ENCODE measurements at regions of chr6 and their contacts with region 1.

Region 1: DNA sequence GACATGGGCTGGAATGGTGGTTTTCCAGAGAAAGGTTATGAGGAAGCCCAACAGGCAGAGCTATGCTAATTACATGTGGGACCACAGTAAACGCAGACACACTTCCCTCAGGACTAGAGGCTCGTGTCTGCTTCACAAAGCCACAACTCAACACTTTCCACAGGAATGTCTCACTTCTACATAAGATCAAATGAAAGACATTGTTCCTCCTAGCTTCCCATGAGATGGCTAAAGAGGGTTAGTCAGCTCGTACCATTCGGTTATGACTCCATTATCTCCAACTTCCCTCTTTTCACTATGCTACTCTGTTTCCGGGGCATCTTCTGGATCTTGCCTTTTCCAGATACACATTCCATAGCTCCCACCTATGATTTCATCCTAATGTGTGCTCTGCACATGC is 29.1 kb upstream of the ZC3H12D start:
- DNase-seq: no peak
- ATAC-seq: no peak
- H3K4me3 Mint-ChIP-seq: no peak overlapping the region
- H3K27ac Mint-ChIP-seq: no peak overlapping the region
- H3K4me1 Mint-ChIP-seq: peaks cover 49% of the 10 kb centered on the region
- H3K27me3 Mint-ChIP-seq: no peaks in the 10 kb centered on the region

Region 2: DNA sequence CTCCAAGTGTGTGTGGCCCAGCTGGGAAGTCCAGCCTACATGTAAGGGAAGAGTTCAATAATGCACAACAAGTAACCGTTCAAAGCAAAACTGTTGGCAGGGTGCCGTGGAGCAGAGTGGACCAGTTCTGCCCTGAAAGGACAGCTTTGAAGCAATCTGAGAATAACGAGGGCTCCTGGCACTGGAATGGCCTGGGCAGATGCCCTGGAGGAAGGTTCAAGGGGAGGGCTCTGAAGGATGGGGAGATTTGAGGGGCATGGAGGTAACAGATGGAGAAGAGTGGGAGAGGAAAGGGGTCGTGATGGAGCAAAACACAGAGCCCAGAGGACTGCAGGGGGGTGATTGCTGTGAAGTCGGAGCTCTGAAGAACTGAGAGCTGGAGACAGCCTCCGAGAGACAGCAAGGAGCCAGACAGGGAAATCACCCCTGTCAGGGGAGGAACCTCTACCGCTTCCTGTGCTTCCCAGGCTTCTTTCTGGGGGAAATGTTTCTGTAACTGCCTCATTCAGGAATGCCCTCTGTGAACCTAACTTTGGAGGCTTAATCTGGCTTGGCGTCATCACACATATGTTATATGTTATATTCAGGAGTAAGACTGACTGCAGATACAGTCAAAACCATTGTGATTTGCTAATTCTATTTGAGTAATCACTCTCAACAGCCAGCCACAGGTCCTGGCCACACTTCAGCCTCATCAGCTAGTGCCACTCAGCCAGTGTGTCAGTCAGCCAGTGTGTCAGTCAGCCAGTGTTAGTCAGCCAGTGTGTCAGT is 70.3 kb before region 1 on chr6:
- CTCF ChIA-PET with region 1: interaction called, 13 read pairs
- DNase-seq: no peak
- ATAC-seq: peak; percentile 37
- H3K4me3 Mint-ChIP-seq: no peak overlapping the region
- H3K27ac Mint-ChIP-seq: no peak overlapping the region
- H3K4me1 Mint-ChIP-seq: peaks cover 43% of the 10 kb centered on the region
- H3K27me3 Mint-ChIP-seq: no peaks in the 10 kb centered on the region

Region 3: DNA sequence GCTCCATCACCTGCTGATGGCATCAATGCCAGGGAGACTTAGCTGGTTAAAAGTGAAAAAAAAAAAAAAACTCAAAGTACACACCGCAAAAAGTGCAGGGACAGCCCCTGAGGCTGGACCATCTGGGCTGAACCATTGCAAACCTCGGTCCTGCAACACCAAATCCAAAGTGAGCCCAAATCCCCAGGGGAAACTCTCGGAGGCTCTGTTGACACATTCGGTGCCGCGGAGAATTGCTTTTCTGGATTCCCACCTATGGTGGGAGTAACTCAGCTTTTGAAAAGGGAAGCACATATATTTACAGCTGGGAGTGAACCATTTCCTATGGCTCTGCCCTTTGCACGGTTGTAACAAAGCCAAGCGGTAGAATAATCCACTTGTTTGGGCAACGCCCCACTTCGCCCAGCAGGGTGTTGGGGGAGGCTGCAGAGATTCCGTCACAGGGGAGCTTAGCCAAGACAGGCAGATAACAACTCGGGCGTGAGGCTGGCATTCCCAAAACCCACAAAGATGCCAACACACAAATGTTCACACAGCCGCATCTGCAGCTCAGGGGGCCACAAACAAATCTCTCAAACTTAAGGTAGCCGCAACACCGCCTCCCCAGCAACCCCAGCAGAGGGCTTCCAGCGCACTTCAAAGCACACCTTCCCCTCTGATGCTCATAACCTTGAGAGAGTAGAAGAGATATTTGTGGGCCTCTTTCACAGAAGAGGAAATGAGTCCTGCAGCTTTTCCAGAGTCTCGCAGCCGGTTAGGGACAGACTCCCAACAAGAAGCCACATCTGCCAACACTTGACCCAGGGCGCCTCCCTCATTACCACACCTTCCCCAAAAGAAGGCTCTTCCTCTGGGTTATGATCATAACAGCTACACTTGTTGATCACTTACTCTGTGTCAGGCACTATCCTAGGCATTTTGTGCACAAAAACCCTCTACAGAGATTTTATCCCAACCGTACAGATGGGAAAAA is 40.5 kb before region 1 on chr6:
- CTCF ChIA-PET with region 1: interaction called, 17 read pairs
- DNase-seq: no peak
- ATAC-seq: no peak
- H3K4me3 Mint-ChIP-seq: no peak overlapping the region
- H3K27ac Mint-ChIP-seq: peak overlapping the region; percentile 9
- H3K4me1 Mint-ChIP-seq: peaks cover 48% of the 10 kb centered on the region
- H3K27me3 Mint-ChIP-seq: no peaks in the 10 kb centered on the region

Region 4: DNA sequence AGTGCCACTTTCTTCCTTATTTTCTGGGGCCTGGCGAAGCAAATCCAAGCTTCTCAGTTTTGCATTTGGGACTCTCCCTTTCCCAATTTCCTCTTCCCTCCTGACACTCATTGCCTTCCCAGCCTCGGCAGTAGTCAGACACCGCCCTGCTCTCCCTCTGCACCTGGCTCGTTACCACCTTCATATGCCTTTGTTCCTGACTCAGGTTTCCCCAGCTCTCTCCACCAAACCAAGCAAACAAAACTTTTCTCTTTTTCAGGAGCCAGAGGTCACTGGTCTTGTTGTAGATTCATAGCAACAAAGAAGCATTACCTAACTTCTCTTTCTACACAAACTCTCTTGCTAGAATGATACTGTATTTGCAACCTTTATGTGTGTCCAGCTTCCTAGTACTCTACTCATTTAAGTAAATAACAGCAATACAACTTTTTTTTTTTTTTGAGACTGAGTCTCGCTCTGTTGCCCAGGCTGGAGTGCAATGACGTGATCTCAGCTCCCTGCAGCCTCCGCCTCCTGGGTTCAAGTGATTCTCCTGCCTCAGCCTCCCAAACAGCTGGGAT is 20.1 kb before region 1 on chr6:
- CTCF ChIA-PET with region 1: interaction called, 17 read pairs
- DNase-seq: no peak
- ATAC-seq: no peak
- H3K4me3 Mint-ChIP-seq: no peak overlapping the region
- H3K27ac Mint-ChIP-seq: no peak overlapping the region
- H3K4me1 Mint-ChIP-seq: peaks cover 61% of the 10 kb centered on the region
- H3K27me3 Mint-ChIP-seq: no peaks in the 10 kb centered on the region

Region 5: GRCh38 chr6:149503276-149503675 is 10.6 kb before region 1 on chr6:
- CTCF ChIA-PET with region 1: interaction called, 15 read pairs
- DNase-seq: no peak
- ATAC-seq: no peak
- H3K4me3 Mint-ChIP-seq: no peak overlapping the region
- H3K27ac Mint-ChIP-seq: no peak overlapping the region
- H3K4me1 Mint-ChIP-seq: peaks cover 35% of the 10 kb centered on the region
- H3K27me3 Mint-ChIP-seq: no peaks in the 10 kb centered on the region

Region 6: DNA sequence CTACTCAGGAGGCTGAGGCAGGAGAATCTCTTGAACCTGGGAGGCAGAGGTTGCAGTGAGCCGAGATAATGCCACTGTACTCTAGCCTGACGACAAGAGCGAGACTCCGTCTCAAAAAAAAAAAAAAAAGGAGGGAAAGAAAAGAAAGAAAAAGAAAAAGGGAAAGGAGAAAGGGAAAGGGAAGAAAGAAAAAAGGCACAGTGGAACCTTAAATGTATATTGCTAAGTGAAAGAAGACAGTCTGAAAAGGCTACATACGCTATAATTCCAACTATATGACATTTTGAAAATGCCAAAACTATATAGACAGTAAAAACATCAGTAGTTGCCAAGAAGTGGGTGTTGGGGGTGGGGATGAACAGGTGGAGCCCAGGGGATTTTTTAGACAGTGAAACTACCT is 15.7 kb after region 1 on chr6:
- CTCF ChIA-PET with region 1: interaction called, 21 read pairs
- DNase-seq: no peak
- ATAC-seq: no peak
- H3K4me3 Mint-ChIP-seq: no peak overlapping the region
- H3K27ac Mint-ChIP-seq: no peak overlapping the region
- H3K4me1 Mint-ChIP-seq: peaks cover 17% of the 10 kb centered on the region
- H3K27me3 Mint-ChIP-seq: no peaks in the 10 kb centered on the region

Region 7: DNA sequence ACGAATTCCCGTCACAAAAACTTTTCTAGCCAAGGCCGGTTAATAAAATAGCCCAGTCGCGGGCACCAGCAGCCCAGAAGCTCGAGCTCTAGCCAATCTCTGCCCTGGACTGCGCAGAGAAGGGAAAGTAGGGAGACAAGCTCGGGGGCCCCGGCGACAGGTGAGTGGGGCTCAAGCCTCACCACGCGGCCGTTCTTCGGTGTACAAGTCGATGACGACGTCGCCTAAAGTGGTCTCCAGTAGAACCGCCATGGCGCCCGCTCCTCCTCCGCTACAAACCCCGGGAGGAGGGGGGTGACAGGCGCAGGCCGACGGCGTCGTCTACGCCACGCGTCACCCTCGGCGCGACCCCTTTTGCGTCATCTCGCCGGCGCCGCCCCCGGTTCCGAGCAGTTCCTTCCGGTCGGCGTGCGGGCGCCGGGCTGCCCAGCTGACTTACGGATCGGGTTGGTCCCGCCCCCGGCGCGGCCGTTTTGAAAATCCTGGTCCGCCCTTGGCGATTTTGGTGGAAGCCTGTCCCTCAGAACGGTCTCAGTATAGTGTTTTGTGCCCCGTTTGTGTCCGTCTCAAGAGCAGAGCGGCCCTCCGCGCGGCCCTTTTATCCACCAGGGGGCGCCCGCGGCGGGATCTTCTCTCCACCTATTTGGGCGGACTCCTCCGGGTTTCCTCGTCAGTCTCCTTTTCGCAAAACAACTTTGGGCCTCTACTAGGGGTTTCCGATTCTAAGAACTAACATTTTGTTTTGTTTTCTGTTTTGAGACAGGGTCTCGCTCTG is 32.0 kb after region 1 on chr6 and contains the start of gene PPIL4:
- CTCF ChIA-PET with region 1: interaction called, 15 read pairs
- DNase-seq: peak; percentile 97
- ATAC-seq: peak; percentile 86
- H3K4me3 Mint-ChIP-seq: peak within 1 kb of the TSS; percentile 99
- H3K27ac Mint-ChIP-seq: peak within 1 kb of the TSS; percentile 99
- H3K4me1 Mint-ChIP-seq: peaks cover 37% of the 10 kb centered on the region
- H3K27me3 Mint-ChIP-seq: no peaks in the 10 kb centered on the region
- total RNA-seq, gene PPIL4: 17.8 to 18.7 TPM

Region 8: DNA sequence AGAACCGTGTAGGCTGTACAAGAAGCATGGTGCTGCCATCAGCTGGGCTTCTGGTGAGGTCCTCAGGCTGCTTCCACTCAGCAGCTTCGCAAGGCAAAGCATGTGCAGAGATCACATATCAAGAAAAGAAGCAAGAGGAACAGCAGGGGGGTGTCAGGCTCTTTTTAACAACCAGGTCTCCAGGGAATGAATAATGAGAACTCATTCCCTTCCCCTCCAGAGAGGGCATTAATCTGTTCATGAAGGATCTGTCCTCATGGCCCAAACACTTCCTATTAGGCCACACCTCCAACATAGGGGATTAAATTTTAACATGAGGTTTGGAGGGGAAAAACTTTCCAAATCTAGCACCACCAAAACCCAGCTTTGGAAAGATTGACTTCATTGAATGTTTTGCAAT is 72.2 kb after region 1 on chr6:
- CTCF ChIA-PET with region 1: no interaction called
- DNase-seq: no peak
- ATAC-seq: no peak
- H3K4me3 Mint-ChIP-seq: no peak overlapping the region
- H3K27ac Mint-ChIP-seq: no peak overlapping the region
- H3K4me1 Mint-ChIP-seq: no peaks in the 10 kb centered on the region
- H3K27me3 Mint-ChIP-seq: no peaks in the 10 kb centered on the region

Region 9: GRCh38 chr6:149755300-149756260 is 241.7 kb after region 1 on chr6:
- CTCF ChIA-PET with region 1: no interaction called
- DNase-seq: peak; percentile 7
- ATAC-seq: no peak
- H3K4me3 Mint-ChIP-seq: no peak overlapping the region
- H3K27ac Mint-ChIP-seq: no peak overlapping the region
- H3K4me1 Mint-ChIP-seq: peaks cover 29% of the 10 kb centered on the region
- H3K27me3 Mint-ChIP-seq: no peaks in the 10 kb centered on the region